ENCODE measurements at regions of chr3 and their contacts with region 1.

Region 1: DNA sequence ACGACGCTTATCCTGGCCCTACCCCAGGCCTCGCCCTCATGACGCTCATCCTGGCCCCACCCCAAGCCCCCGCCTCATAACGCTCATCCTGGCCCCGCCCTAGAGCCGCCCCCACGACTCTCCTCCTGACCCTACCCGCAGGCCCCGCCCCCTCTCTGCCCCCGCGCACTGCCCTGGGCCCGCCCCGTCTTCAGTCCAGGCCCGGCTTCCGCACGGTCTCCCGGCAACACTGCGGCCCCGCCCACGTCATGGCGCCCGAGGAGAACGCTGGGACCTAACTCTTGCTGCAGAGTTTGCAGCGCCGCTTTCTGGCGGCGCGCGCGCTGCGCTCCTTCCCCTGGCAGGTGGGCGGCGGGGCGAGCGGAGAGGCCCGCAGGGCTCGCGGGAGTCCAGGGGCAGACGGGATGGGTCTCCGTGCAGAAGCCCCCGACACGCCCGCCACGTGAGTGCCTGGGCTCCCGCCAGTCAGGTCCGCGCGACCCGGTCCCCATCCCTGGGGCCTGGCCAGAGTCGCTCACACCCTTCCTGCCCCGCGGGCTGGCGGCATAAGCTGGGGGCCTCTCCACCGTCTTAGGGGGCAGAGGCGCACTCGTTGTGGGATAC is 52.5 kb upstream of the ROPN1B start:
- DNase-seq: peak; percentile 99
- H3K4me3 Mint-ChIP-seq: peak overlapping the region; percentile 84
- H3K27ac Mint-ChIP-seq: peak overlapping the region; percentile 83
- H3K4me1 Mint-ChIP-seq: peaks cover 23% of the 10 kb centered on the region
- H3K27me3 Mint-ChIP-seq: no peaks in the 10 kb centered on the region

Region 2: DNA sequence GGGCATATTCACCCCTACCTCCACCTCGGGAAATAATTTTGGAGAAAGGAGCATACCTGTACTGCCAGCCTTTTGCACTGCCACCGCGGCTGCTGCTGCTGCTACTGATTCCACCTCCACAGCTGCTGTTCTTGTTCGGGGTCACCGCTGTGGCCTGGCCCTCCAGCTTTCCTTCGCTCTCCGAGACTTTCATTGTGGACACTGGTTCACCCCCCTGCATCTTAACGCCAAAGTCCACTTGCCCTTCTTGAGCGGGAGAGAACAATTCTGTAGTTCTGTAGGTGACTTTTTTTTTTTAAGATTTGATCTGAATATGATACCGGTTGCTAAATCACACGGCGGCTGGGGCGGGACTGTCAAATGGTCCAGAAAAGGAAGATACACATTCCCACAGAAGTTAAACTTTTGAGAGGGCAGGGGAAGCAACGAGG is 321.9 kb before region 1 on chr3:
- CTCF ChIA-PET with region 1: no interaction called
- POLR2A ChIA-PET with region 1: no interaction called
- intact Hi-C with region 1: loop called (anchors 2 kb)
- DNase-seq: peak; percentile 23
- H3K4me3 Mint-ChIP-seq: peak overlapping the region; percentile 91
- H3K27ac Mint-ChIP-seq: peak overlapping the region; percentile 62
- H3K4me1 Mint-ChIP-seq: peaks cover 33% of the 10 kb centered on the region
- H3K27me3 Mint-ChIP-seq: no peaks in the 10 kb centered on the region

Region 3: DNA sequence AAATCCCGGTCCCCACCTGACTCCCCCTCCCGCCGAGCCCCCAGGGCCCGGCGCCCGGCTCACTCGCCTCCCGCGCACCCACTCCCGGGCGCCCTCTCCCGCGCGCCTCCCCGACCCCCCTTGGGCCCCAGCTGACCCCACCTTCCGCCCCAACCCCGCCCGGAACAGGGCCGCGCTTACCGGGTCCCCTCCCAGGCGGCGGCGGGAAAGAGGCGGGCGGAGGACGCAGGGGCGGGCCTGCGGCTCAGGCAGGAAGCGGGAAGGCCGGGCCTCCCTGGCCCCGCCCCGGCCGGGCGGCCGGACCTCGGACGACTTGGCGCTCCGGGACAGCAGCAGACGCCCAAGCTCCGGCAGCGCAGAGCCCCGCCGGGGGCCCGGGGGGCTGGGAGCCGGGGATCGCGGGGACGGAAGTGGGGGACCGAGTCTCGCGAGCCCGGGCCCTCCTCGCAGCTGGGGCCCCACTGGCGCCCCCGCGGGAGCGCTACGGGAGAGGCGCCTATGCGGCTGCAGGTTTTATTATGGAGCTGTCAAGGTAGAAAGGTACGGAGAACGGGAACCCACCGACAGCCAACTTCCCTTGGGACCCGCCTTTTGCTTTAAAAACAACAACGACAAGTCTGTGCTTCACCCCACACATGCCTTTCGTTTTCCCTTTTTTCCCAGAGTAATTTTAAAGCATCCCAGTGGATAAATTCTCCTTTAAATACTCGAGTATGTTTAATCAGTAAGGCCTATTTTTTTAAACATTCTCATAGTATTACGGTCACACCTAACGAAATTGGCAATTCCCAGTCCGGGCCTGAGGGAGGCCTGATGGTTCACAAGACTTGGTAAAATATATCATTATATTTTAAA is 167.7 kb after region 1 on chr3 and contains the start of gene SLC41A3:
- CTCF ChIA-PET with region 1: no interaction called
- POLR2A ChIA-PET with region 1: no interaction called
- intact Hi-C with region 1: loop called (anchors 1 kb)
- DNase-seq: peak; percentile 90
- H3K4me3 Mint-ChIP-seq: peak within 1 kb of the TSS; percentile 85
- H3K27ac Mint-ChIP-seq: peak within 1 kb of the TSS; percentile 67
- H3K4me1 Mint-ChIP-seq: peaks cover 19% of the 10 kb centered on the region
- H3K27me3 Mint-ChIP-seq: no peaks in the 10 kb centered on the region
- total RNA-seq, gene SLC41A3: 26.3 to 27.3 TPM

Region 4: DNA sequence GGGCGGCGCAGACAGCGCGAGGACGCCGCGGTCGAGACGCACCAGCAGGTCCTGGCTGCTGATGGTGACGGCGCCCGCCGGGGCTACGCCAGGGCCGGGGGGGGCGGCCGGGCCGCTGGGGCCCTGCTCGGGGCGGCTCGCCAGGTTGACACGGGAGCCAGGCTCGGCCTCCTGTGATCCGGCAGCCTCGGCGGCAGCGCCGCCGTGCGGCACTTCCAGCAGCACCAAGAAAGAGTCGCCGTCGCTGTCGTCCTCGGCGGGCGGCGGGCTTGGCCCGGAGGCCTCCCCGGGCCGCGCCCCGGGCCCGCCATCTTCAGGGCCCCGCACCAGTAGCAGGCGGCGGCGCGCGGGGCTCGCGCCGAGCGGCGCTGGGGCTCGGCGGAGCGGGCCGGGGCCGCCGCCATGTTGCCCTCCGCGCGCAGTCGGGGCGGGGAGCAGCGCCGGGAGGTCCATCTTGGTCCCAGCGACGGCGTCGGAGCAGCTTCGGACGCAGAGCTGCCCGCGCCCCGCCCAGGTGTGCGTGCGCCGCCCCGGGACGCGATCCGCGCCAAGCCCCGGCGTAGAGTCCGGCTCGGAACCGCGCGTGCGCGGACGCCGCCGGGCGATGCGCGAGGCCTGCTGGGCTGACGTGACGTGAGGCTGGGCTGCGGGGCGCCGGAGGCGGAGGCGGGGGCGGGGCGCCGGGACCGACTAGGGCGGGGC is 559.1 kb after region 1 on chr3 and contains the start of gene ZXDC:
- CTCF ChIA-PET with region 1: no interaction called
- POLR2A ChIA-PET with region 1: no interaction called
- intact Hi-C with region 1: loop called (anchors 1 kb)
- DNase-seq: peak; percentile 94
- H3K4me3 Mint-ChIP-seq: peak within 1 kb of the TSS; percentile 88
- H3K27ac Mint-ChIP-seq: peak within 1 kb of the TSS; percentile 79
- H3K4me1 Mint-ChIP-seq: peaks cover 39% of the 10 kb centered on the region
- H3K27me3 Mint-ChIP-seq: no peaks in the 10 kb centered on the region
- total RNA-seq, gene ZXDC: 18.2 to 19.1 TPM

Measured in activated CD4-positive, alpha-beta memory T cell treated with anti-CD3 and anti-CD28 coated beads for 36 hours (primary cell).